Mammary epithelial cell (primary cell): ENCODE measurements at regions of chr16 and their contacts with region 1.

Region 1: DNA sequence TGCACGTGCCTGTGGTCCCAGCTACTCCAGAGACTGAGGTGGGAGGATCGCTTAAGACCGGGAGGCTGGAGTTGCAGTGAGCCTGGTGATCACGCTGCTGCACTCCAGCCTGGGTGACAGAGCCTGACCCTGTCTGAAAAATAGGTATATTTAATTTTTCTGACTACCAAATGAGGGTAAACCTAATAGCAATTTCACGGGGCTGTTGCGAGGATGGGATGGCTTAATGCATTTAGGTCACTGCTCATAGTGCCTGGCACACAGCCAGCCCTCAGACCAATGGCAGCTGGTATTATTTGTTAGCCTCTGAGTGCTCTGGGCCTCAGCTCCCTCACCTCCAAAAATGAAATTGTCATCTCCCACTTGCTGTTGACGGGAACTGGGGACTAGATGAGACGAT is 5.9 kb upstream of the CDIP1 start:
- DNase-seq: no peak
- H3K4me3 ChIP-seq: no peak overlapping the region
- H3K27ac ChIP-seq: no peak overlapping the region
- H3K4me1 ChIP-seq: no peaks in the 10 kb centered on the region
- H3K27me3 ChIP-seq: no peaks in the 10 kb centered on the region
- CTCF ChIP-seq: no peak

Region 2: GRCh38 chr16:4350787-4351659 is 193.4 kb before region 1 on chr16 and contains the start of gene PAM16:
- CTCF ChIA-PET with region 1: no interaction called
- dilution Hi-C with region 1: no loop called
- in situ Hi-C with region 1: no loop called
- intact Hi-C with region 1: loop called (anchors 10 kb)
- DNase-seq: peak; percentile 86
- H3K4me3 ChIP-seq: peak within 1 kb of the TSS; percentile 41 to 96 (median 72)
- H3K27ac ChIP-seq: peak within 1 kb of the TSS; percentile 46
- H3K4me1 ChIP-seq: peaks cover 5% of the 10 kb centered on the region
- H3K27me3 ChIP-seq: no peaks in the 10 kb centered on the region
- CTCF ChIP-seq: peak in 1 of 2 donors; percentile 19
- total RNA-seq, gene PAM16: 20.3 to 62.1 TPM

Region 3: DNA sequence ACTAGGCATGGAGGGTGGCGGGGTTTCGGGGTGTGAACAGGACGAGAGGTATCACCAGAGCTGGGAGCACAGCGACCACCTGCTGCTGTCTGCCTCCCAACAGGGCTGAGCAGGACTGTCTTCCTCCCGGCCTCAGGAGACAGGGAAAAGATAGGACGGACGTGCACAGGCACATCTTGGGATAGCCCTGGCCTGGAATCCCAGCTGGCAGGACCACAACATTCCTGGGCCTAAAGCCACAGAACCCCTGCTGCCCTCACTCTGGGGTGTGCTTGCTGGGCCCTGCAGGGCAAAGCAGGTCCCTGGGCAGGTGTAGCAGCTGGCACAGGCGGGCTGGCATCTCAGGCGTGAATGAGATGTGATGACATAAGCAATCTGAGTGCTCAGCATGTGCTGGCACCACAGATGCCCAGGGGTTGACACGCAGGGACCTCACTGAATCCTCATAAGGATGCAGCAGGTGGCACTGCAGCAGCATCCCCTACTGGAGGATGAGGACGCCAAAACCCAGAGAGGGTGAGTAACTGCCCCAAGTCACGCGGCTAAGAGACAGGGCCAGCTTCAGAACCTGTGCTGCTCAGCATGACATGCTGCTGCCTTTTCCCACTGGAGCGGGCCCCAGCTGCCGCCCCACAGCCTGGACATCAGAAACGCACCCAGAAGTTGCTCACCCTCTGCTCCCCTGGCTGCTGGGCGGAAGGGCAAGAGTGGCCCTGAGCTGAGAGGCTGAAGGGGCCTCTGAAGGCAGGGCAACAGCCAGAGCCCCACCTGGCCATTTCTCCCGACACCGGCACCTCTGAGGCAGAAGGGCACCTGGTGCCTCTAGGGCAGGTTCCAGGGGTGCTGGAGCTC is 135.2 kb before region 1 on chr16:
- CTCF ChIA-PET with region 1: no interaction called
- dilution Hi-C with region 1: no loop called
- in situ Hi-C with region 1: no loop called
- intact Hi-C with region 1: loop called (anchors 1 kb)
- DNase-seq: peak; percentile 44
- H3K4me3 ChIP-seq: no peak overlapping the region
- H3K27ac ChIP-seq: no peak overlapping the region
- H3K4me1 ChIP-seq: peaks cover 24% of the 10 kb centered on the region
- H3K27me3 ChIP-seq: no peaks in the 10 kb centered on the region
- CTCF ChIP-seq: peak; percentile 36 to 67

Region 4: GRCh38 chr16:4517812-4518680 is 26.4 kb before region 1 on chr16:
- CTCF ChIA-PET with region 1: no interaction called
- dilution Hi-C with region 1: no loop called
- in situ Hi-C with region 1: no loop called
- intact Hi-C with region 1: loop called (anchors 1 kb)
- DNase-seq: no peak
- H3K4me3 ChIP-seq: no peak overlapping the region
- H3K27ac ChIP-seq: no peak overlapping the region
- H3K4me1 ChIP-seq: peaks cover 9% of the 10 kb centered on the region
- H3K27me3 ChIP-seq: no peaks in the 10 kb centered on the region
- CTCF ChIP-seq: peak; percentile 40 to 60

Region 5: DNA sequence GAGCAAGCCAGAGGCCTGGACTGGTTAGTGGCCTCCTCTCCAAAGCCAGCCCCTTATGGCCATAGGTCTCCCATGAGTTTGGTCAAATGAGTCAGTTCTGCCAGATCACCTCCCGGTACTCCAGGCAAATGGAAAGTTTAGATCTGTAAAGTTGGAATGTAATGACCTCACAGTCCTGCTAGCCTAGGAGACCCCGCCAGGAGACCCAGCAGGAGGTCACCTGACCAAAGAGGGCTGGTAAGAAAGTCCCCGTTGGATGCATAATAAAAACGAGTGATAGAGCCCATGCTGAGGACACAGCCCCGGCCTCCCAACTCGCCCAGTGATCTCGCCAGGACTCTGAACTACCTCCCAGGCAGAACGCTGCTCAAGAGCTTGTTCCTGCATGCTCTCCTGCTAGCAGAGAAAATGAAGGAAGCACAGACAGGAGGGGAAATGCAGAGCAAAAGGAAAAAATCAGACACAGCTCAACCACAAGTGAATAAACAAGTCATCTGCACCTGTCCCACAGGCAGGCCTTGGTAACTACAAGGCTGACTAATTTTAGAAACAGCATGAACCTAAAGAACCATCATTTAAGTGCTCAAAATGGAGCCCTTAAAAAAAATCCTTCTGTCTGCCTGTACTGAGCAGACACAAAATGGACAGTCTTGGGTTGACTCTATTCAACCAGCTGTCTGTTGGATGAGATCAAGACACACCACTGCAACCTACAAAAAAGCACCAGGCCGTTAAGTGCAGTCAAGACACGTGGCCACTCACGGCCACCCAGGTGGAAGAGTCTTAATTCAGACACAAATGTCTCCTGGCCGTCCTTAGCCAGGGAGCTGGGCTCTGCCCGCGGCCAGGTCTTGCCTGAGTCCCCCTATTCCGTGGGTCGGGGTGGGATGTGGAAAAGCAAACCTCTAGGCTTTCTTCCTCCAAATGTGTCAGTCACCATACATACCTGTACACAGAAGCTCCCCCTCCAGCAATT is 15.1 kb before region 1 on chr16:
- CTCF ChIA-PET with region 1: interaction called, 14 read pairs
- dilution Hi-C with region 1: no loop called
- in situ Hi-C with region 1: no loop called
- intact Hi-C with region 1: no loop called
- DNase-seq: peak; percentile 77
- H3K4me3 ChIP-seq: no peak overlapping the region
- H3K27ac ChIP-seq: peak overlapping the region; percentile 60
- H3K4me1 ChIP-seq: peaks cover 16% of the 10 kb centered on the region
- H3K27me3 ChIP-seq: no peaks in the 10 kb centered on the region
- CTCF ChIP-seq: peak in 1 of 2 donors; percentile 9

Region 6: GRCh38 chr16:4924593-4925378 is 380.3 kb after region 1 on chr16:
- CTCF ChIA-PET with region 1: no interaction called
- dilution Hi-C with region 1: no loop called
- in situ Hi-C with region 1: no loop called
- intact Hi-C with region 1: no loop called
- DNase-seq: peak; percentile 56
- H3K4me3 ChIP-seq: no peak overlapping the region
- H3K27ac ChIP-seq: peak overlapping the region; percentile 32
- H3K4me1 ChIP-seq: peaks cover 44% of the 10 kb centered on the region
- H3K27me3 ChIP-seq: no peaks in the 10 kb centered on the region
- CTCF ChIP-seq: no peak